SK-MEL-5 (cell line): ENCODE measurements at regions of chr4 and their contacts with region 1.

Region 1: DNA sequence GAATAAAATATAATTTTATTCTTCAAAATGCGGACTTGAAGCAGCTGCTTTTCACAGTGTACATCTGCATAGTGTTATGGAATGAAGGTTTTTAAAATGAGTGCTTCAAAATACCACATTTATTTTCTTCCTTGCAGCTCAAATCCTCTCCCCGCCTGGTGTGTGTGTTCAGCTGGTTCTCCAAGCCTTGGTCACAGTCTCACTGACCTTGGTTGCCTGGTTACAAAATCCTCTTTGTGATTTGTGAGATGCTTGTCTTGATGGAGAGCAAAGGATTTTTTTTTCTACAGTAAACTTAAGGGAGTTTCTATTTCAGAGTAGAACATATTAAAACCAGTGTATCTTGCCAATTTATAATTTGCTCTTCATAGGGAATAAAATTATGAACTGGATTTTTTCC is 139.2 kb downstream of the PCDH18 start:
- DNase-seq: no peak

Region 2: GRCh38 chr4:137451172-137451850 is 58.3 kb after region 1 on chr4:
- in situ Hi-C with region 1: loop called (anchors 10 kb)
- DNase-seq: no peak

Region 3: DNA sequence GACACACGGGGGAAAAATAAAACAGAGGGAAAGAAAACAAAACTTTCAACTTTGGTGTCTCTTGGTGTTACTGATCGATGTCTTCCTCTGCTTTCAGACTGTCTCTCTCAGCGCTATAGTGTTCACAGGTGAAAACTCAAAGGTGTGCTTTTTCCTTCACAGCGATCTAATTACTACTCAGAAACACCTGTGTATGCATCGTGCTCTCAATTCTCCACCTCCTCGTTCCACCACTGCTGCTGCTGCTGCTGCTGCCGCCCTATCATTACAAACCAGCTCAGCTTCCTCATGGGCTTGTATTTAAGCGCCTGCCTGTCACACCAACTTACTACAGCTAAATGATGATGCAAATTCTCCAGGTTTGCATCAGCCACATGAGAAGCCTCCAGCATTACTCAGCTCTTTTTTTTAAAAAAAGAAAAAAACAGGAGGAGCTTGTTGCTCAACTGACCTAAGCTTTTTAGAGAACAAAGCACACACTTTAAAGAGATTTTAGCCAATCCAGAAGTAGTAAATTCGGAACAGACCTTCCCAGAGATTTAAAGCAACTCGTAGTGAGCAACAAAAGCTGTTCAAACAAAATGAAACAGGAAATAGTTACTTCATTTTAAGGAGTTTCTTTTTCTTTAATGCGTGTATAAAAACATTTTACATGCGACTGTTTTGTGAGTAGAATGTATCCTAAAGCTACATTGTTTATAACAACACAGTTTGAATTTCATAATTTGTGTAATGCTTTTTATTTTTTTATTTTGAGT is 849.2 kb after region 1 on chr4 and contains the start of gene SLC7A11:
- in situ Hi-C with region 1: no loop called
- DNase-seq: peak; percentile 96
- total RNA-seq, gene SLC7A11: 52.1 and 53.5 TPM in 2 replicates